ENCODE measurements at regions of chr22 and their contacts with region 1.

Region 1: DNA sequence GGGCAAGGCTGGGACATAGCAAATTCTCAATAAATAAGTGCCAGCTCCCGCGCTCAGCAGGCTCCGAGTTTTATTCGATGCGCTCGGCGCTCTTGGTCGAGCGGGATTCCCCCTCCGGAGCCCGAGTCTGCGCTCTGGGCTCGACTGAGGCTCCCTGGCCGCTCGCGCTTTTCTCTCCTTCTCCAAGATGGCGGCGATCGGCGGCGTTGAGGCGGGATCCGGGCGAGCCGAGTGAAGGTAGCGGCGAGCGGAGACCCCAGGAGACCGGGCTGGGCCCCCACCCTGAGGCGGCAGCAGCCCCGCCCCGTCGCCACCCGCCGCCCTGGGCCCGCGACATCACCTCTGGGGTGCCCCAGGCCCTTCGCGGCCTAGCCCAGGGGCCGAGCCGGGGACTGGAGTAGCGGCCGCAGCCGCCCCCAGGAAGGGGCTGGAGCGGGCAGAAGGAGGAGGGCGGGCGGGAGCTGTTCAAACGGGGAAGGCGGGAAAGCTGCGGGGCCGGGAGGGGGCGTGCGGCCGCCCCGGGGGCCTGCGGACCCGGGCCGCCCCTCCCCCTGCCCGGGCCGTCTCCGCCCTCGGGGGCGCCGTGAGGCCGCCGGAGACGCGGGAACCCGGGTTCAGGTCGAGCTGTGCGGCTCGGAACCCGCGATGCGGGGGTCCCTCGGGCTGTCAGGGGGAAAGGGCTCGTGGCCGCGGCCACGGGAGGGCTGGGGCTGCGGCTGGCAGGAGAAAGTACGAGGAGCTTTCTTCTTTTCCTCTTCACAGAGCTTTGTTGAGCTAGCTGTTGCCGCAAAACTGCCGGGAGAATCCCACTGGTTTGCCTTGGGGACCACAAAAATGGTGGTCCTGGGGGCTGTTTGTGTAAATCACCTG is at the start of gene HMGXB4:
- DNase-seq: peak; percentile 77 to 94 (median 82)
- ATAC-seq: peak; percentile 93
- H3K4me3 ChIP-seq: peak within 1 kb of the TSS; percentile 72
- H3K4me3 Mint-ChIP-seq: peak within 1 kb of the TSS; percentile 94
- H3K27ac ChIP-seq: peak within 1 kb of the TSS; percentile 60 to 85
- H3K27ac Mint-ChIP-seq: peak within 1 kb of the TSS; percentile 94
- H3K4me1 ChIP-seq: peaks cover 14% of the 10 kb centered on the region
- H3K4me1 Mint-ChIP-seq: peaks cover 31% of the 10 kb centered on the region
- H3K27me3 ChIP-seq: no peaks in the 10 kb centered on the region
- H3K27me3 Mint-ChIP-seq: no peaks in the 10 kb centered on the region
- CTCF ChIP-seq: peak; percentile 15
- total RNA-seq, gene HMGXB4: 41.4 to 44.1 TPM

Region 2: GRCh38 chr22:35128637-35129036 is 128.9 kb before region 1 on chr22:
- CTCF ChIA-PET with region 1: no interaction called
- POLR2A ChIA-PET with region 1: no interaction called
- intact Hi-C with region 1: no loop called
- DNase-seq: no peak
- ATAC-seq: no peak
- H3K4me3 ChIP-seq: no peak overlapping the region
- H3K4me3 Mint-ChIP-seq: no peak overlapping the region
- H3K27ac ChIP-seq: no peak overlapping the region
- H3K27ac Mint-ChIP-seq: no peak overlapping the region
- H3K4me1 ChIP-seq: no peaks in the 10 kb centered on the region
- H3K4me1 Mint-ChIP-seq: no peaks in the 10 kb centered on the region
- H3K27me3 ChIP-seq: peaks cover 12 to 23% of the 10 kb centered on the region in 2 experiments
- H3K27me3 Mint-ChIP-seq: peaks cover 71% of the 10 kb centered on the region
- CTCF ChIP-seq: no peak

Region 3: DNA sequence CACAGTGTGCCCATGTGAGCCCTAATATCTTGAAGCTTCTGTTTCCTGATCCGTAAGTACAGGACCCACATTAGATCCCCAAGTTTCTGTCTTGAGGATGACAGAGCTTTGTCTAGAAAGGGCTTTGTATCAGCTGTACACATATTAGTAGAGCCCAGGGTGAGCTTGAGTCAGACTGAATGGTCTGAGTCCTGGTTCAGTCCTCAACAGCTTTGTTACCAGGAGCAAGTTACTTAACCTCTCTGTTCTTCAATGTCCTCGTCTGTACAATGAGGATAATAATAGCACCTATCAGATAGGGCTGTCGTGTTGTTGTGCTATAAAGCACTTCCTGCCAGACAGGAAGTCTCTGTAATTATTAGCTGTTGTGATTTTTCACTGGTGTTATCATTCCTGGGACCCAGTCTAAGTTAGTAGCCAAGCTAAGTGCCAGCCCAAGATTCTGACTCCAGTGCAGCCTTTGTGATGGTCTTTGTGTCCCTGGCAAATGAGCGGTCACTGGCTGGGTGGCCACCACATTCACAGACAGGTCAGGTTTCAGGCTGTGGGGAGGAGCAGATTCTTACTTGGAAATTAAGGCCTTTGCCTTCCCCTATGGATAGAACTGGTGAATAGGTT is 48.9 kb after region 1 on chr22:
- CTCF ChIA-PET with region 1: interaction called, 3 read pairs
- POLR2A ChIA-PET with region 1: interaction called, 16 read pairs
- intact Hi-C with region 1: no loop called
- DNase-seq: peak in 4 of 14 experiments; percentile 16 to 66 (median 44)
- ATAC-seq: peak; percentile 75
- H3K4me3 ChIP-seq: no peak overlapping the region
- H3K4me3 Mint-ChIP-seq: peak overlapping the region; percentile 67
- H3K27ac ChIP-seq: peak overlapping the region in 1 of 2 donors; percentile 35
- H3K27ac Mint-ChIP-seq: peak overlapping the region; percentile 77
- H3K4me1 ChIP-seq: peaks cover 89% of the 10 kb centered on the region
- H3K4me1 Mint-ChIP-seq: peaks cover 90% of the 10 kb centered on the region
- H3K27me3 ChIP-seq: no peaks in the 10 kb centered on the region
- H3K27me3 Mint-ChIP-seq: no peaks in the 10 kb centered on the region
- CTCF ChIP-seq: no peak

Region 4: DNA sequence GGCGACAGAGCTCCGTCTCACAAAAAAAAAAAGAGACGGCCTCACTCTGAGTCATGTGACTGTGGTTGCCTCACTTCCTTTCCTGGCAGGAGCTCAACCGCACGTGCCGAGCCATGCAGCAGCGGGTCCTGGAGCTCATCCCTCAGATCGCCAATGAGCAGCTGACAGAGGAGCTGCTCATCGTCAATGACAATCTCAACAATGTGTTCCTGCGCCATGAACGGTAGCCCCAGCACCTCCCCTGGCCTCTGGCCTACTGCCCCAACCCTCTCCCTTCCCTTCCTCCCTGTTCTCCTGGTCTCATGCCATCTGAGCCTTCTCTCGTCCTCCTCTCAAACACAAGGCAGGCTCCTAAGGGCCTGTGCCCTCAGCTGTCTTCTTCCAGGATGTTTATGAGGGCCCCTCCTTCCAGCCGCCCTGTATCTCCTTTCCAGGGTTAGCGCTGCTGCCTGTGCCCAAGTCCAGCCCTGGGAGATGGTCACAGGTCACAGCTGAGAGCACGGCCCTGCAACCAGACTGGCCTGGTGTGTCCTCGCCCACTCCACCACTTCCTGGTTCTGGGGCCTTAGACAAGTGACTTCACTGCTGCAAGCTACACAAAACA is 72.8 kb after region 1 on chr22:
- CTCF ChIA-PET with region 1: no interaction called
- POLR2A ChIA-PET with region 1: interaction called, 15 read pairs
- intact Hi-C with region 1: no loop called
- DNase-seq: peak; percentile 23 to 83 (median 52)
- ATAC-seq: peak; percentile 71
- H3K4me3 ChIP-seq: no peak overlapping the region
- H3K4me3 Mint-ChIP-seq: peak overlapping the region; percentile 69
- H3K27ac ChIP-seq: peak overlapping the region in 1 of 2 donors; percentile 64
- H3K27ac Mint-ChIP-seq: peak overlapping the region; percentile 86
- H3K4me1 ChIP-seq: peaks cover 55% of the 10 kb centered on the region
- H3K4me1 Mint-ChIP-seq: peaks cover 34% of the 10 kb centered on the region
- H3K27me3 ChIP-seq: no peaks in the 10 kb centered on the region
- H3K27me3 Mint-ChIP-seq: no peaks in the 10 kb centered on the region
- CTCF ChIP-seq: no peak

Region 5: DNA sequence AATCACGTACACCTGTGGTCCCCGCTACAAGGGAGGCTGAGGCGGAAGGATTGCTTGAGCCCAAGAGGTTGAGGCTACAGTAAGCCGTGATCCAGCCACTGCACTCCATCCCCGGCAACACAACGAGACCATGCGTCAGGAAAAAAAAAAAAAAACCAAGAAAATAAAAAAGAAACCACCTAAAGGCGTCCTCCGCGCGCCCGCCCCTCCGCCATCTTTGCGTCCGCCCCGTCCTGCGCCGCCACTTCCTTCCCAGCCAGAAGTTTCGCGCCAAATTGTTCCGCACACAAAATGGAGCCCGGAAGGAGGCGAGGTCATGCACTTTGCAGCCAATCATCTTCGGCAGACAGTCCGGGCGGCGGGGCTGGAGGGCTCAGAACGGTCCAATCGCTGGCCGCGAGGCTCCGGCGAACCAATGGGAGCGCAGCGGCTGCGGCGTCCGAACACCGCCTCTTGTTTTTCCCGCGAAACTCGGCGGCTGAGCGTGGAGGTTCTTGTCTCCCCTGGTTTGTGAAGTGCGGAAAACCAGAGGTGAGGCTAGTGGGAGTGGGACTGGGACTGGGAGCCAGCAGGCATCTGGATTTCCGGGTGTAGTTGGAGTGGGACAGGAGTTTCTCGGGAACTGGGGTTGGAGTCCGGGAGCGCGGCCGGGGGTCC is 142.2 kb after region 1 on chr22 and contains the start of gene MCM5:
- CTCF ChIA-PET with region 1: no interaction called
- POLR2A ChIA-PET with region 1: no interaction called
- intact Hi-C with region 1: loop called in 1 of 2 experiments (anchors 5 kb)
- DNase-seq: peak; percentile 94 to 99 (median 96)
- ATAC-seq: peak; percentile 98
- H3K4me3 ChIP-seq: peak within 1 kb of the TSS; percentile 87
- H3K4me3 Mint-ChIP-seq: peak within 1 kb of the TSS; percentile 98
- H3K27ac ChIP-seq: peak within 1 kb of the TSS; percentile 12 to 69
- H3K27ac Mint-ChIP-seq: peak within 1 kb of the TSS; percentile 95
- H3K4me1 ChIP-seq: peaks cover 34% of the 10 kb centered on the region
- H3K4me1 Mint-ChIP-seq: peaks cover 18% of the 10 kb centered on the region
- H3K27me3 ChIP-seq: no peaks in the 10 kb centered on the region
- H3K27me3 Mint-ChIP-seq: no peaks in the 10 kb centered on the region
- CTCF ChIP-seq: no peak
- total RNA-seq, gene MCM5: 21.6 to 22.6 TPM

Region 6: GRCh38 chr22:35552196-35552842 is 294.8 kb after region 1 on chr22:
- CTCF ChIA-PET with region 1: no interaction called
- POLR2A ChIA-PET with region 1: no interaction called
- intact Hi-C with region 1: loop called in 1 of 2 experiments (anchors 5 kb)
- DNase-seq: peak; percentile 77 to 92 (median 82)
- ATAC-seq: peak; percentile 97
- H3K4me3 ChIP-seq: no peak overlapping the region
- H3K4me3 Mint-ChIP-seq: peak overlapping the region; percentile 40
- H3K27ac ChIP-seq: no peak overlapping the region
- H3K27ac Mint-ChIP-seq: peak overlapping the region; percentile 0
- H3K4me1 ChIP-seq: peaks cover 24% of the 10 kb centered on the region
- H3K4me1 Mint-ChIP-seq: peaks cover 17% of the 10 kb centered on the region
- H3K27me3 ChIP-seq: no peaks in the 10 kb centered on the region
- H3K27me3 Mint-ChIP-seq: no peaks in the 10 kb centered on the region
- CTCF ChIP-seq: no peak

Measured in CD4-positive, alpha-beta T cell (primary cell).